GM18951 (cell line): ENCODE measurements at regions of chr5 and their contacts with region 1.

Region 1: DNA sequence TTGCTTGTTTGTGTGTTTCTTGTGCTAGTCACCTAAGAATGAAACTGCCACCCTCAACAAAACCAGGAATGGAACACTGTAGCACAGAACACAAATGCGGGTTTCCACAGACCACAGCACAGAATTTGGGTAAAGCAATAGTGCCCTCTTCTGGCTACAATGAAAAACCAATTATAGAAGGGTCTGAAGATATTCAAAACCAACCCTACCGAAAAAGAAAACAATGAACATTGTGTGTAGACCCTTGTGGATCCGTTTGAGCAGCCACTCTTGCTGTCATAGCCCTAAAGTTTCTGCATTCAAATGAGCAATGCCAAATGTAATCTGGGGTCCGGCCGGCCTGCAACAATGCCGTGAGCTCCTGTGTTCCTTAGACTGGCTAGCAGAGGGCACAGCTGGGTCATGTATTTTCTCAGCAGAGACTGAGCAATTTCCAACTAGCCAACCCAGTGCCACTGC is 8.3 kb upstream of the ENC1 start:
- POLR2A ChIP-seq: no peak

Region 2: GRCh38 chr5:73908395-73908794 is 740.5 kb before region 1 on chr5:
- in situ Hi-C with region 1: loop called (anchors 5 kb)
- POLR2A ChIP-seq: no peak